Activated B cell treated with CpG ODN at 0.5 μM for 24 hours (primary cell): ENCODE measurements at regions of chr3 and their contacts with region 1.

Region 1: GRCh38 chr3:51941798-51942602 is at the starts of genes PARP3 and RRP9:
- DNase-seq: peak; percentile 96
- ATAC-seq: peak; percentile 94
- H3K4me3 Mint-ChIP-seq: peak within 1 kb of the TSS; percentile 90
- H3K27ac Mint-ChIP-seq: peak within 1 kb of the TSS; percentile 77
- H3K4me1 Mint-ChIP-seq: peaks cover 38% of the 10 kb centered on the region
- H3K27me3 Mint-ChIP-seq: no peaks in the 10 kb centered on the region
- CTCF ChIP-seq: peak; percentile 34
- total RNA-seq, gene PARP3: 9.7 and 12.7 TPM in 2 replicates
- total RNA-seq, gene RRP9: 30.7 and 32.4 TPM in 2 replicates

Region 2: GRCh38 chr3:51384726-51385473 is 557.1 kb before region 1 on chr3 and contains the start of gene MANF:
- CTCF ChIA-PET with region 1: no interaction called
- POLR2A ChIA-PET with region 1: interaction called, 3 read pairs
- intact Hi-C with region 1: loop called (anchors 1 kb)
- DNase-seq: peak; percentile 89
- ATAC-seq: peak; percentile 95
- H3K4me3 Mint-ChIP-seq: peak within 1 kb of the TSS; percentile 99
- H3K27ac Mint-ChIP-seq: peak within 1 kb of the TSS; percentile 98
- H3K4me1 Mint-ChIP-seq: peaks cover 49% of the 10 kb centered on the region
- H3K27me3 Mint-ChIP-seq: no peaks in the 10 kb centered on the region
- CTCF ChIP-seq: no peak
- total RNA-seq, gene MANF: 64.2 and 66.1 TPM in 2 replicates

Region 3: GRCh38 chr3:51955893-51956770 is 14.1 kb after region 1 on chr3:
- CTCF ChIA-PET with region 1: interaction called, 3 read pairs
- POLR2A ChIA-PET with region 1: no interaction called
- intact Hi-C with region 1: loop called (anchors 1 kb)
- DNase-seq: peak; percentile 47
- ATAC-seq: peak; percentile 83
- H3K4me3 Mint-ChIP-seq: peak overlapping the region; percentile 24
- H3K27ac Mint-ChIP-seq: no peak overlapping the region
- H3K4me1 Mint-ChIP-seq: peaks cover 2% of the 10 kb centered on the region
- H3K27me3 Mint-ChIP-seq: peaks cover 19% of the 10 kb centered on the region
- CTCF ChIP-seq: no peak

Region 4: DNA sequence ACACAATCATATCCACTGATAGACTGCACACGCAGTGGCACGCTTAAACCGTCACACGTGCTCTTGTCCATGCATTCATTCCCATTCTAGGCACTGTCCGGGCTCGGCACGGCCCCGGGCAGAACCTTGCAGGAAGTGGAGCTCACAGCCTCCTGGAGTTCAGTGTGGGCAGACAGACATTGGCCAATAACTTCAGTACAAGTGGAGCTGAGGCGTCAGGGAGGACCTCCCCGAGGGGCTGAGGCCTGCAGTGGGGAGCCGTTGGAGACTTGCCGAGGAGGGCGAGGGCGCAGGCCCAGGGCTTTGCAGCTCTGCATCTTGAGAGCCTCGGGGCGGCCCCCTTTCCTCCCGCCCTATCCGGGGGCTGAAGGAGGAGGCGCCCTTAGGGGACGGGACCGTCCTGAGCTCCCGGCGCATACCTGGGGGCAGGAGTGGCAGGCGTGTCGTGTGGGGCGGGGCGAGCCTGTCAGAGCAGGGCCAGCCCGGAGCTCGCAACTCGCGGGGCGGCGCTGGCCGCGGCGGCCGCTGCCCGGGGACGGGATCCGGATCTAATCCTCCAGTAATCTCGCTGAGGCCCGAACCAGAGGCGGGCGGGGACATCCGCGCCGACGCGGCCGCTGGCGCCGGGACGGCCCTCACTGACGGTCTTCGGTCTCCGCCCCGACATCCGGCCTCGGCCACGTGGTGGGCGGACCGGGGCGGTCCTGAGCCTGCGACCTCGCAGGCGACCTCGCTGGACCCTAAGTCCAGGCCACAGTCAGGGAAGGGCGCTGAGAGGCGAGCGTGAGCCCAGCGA is 41.0 kb after region 1 on chr3 and contains the start of gene ACY1:
- CTCF ChIA-PET with region 1: interaction called, 5 read pairs
- POLR2A ChIA-PET with region 1: interaction called, 10 read pairs
- intact Hi-C with region 1: loop called (anchors 2 kb)
- DNase-seq: peak; percentile 70
- ATAC-seq: peak; percentile 79
- H3K4me3 Mint-ChIP-seq: peak within 1 kb of the TSS; percentile 86
- H3K27ac Mint-ChIP-seq: peak within 1 kb of the TSS; percentile 91
- H3K4me1 Mint-ChIP-seq: peaks cover 23% of the 10 kb centered on the region
- H3K27me3 Mint-ChIP-seq: no peaks in the 10 kb centered on the region
- CTCF ChIP-seq: no peak
- total RNA-seq, gene ACY1: 24.9 and 26.7 TPM in 2 replicates

Region 5: DNA sequence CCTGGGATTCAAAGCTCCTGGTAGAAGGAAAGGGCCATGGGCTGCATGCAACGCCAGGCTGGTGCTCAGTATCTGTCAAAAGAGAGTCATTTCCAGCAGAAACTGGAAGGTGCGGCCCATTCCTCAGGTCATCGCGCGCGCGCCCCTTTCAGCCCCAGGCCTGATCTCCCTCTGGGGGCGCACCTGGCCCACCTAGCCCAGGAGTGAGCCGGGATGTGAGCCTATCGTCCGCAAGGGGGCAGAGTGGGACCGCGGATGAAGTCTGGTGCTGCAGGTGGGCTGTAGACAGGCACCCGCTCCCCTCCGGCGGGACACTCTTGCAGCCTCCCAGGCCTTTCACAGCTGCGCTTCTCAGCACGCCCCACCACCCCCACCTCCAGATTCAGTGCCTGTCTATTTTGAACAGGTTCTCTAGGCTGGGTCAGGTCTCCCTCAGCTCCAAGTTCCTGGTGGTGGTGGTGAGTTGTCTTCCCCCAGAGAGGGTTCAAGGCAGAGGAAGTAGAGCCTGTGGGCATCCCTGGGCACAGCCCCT is 59.5 kb after region 1 on chr3:
- CTCF ChIA-PET with region 1: interaction called, 5 read pairs
- POLR2A ChIA-PET with region 1: interaction called, 20 read pairs
- intact Hi-C with region 1: loop called (anchors 1 kb)
- DNase-seq: peak; percentile 85
- ATAC-seq: peak; percentile 99
- H3K4me3 Mint-ChIP-seq: no peak overlapping the region
- H3K27ac Mint-ChIP-seq: no peak overlapping the region
- H3K4me1 Mint-ChIP-seq: peaks cover 5% of the 10 kb centered on the region
- H3K27me3 Mint-ChIP-seq: peaks cover 2% of the 10 kb centered on the region
- CTCF ChIP-seq: peak; percentile 56

Region 6: DNA sequence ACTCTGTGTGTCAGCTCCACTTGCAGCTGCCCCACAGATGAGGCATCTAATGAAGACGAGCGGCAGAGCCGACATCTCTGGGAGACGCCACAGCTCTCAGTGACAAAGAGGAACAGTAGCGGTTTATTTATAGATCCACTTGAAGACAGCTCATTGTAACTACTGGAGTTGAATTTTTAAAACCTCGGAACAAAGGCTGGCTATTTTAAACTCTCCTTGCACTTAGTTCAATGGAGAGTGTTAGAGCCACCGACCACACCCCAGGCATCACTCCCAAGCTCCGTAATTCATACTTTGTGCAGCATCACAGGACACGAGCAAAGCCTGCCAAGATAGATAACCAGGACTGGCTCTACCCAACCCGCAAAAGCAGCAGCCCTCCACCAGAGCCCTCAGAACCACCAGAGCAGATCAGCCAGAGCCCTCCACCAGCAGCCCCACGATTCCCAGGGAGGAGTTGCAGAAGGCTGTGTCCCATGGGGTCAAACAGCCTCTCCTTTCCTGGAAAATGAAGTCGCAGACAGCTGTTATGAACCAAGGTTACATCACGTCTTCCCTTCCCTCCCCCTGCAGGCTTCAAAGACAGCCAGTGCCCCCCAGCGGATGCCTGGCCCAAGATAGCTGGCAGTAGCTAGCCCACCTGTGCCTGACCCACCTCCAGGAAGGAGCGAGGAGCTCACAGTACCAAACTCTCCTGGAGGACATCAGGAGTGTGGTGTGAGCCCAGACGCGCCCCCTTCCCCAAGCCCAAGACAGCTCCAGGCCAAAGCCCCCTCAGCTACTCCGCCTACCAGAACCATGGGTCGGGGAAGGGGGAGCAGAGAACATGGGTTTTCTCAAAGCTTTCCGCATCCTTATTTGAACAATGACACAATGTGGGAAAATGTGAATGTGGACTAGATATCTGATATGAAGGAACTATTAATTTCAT is 166.6 kb after region 1 on chr3:
- CTCF ChIA-PET with region 1: no interaction called
- POLR2A ChIA-PET with region 1: no interaction called
- intact Hi-C with region 1: no loop called
- DNase-seq: no peak
- ATAC-seq: no peak
- H3K4me3 Mint-ChIP-seq: no peak overlapping the region
- H3K27ac Mint-ChIP-seq: no peak overlapping the region
- H3K4me1 Mint-ChIP-seq: peaks cover 2% of the 10 kb centered on the region
- H3K27me3 Mint-ChIP-seq: no peaks in the 10 kb centered on the region
- CTCF ChIP-seq: no peak

Region 7: DNA sequence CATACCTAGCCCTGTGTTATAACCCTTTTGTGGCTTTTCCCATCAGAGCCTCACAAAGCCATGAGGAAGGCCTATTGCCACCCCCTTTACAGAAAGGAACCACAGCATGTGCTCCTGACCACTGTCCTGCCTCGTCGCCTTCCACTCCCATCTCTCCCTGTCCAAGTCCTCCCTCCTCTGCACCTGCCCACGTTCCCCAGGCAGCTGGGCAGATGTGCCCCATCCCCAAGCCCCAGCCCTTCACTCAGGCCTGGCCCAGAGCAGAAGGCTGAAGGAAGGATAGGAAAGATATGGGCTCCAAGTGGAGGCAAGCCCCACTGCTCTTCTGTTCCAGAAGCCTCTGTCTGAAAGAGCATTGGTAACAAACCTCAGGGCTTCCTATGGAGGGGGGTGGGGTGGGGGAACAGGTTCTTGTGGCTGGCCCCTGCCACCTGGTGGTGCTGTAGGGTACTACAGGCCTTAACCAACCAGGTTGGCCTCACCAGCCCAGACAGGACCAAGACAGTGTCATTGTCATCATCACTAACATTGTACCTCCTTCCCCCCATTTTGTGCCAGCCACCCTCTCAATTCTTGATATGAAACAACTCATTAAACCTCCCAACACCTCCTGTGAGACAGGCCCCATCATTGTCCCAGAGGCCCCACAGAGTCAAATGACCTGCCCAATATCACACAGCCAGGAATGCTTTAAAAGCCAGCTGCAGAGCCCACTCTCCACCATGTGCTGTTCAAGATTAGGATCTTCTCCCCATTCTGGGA is 202.2 kb after region 1 on chr3:
- CTCF ChIA-PET with region 1: interaction called, 3 read pairs
- POLR2A ChIA-PET with region 1: no interaction called
- intact Hi-C with region 1: loop called (anchors 1 kb)
- DNase-seq: peak; percentile 73
- ATAC-seq: peak; percentile 100
- H3K4me3 Mint-ChIP-seq: no peak overlapping the region
- H3K27ac Mint-ChIP-seq: no peak overlapping the region
- H3K4me1 Mint-ChIP-seq: peaks cover 4% of the 10 kb centered on the region
- H3K27me3 Mint-ChIP-seq: no peaks in the 10 kb centered on the region
- CTCF ChIP-seq: peak; percentile 66

Region 8: DNA sequence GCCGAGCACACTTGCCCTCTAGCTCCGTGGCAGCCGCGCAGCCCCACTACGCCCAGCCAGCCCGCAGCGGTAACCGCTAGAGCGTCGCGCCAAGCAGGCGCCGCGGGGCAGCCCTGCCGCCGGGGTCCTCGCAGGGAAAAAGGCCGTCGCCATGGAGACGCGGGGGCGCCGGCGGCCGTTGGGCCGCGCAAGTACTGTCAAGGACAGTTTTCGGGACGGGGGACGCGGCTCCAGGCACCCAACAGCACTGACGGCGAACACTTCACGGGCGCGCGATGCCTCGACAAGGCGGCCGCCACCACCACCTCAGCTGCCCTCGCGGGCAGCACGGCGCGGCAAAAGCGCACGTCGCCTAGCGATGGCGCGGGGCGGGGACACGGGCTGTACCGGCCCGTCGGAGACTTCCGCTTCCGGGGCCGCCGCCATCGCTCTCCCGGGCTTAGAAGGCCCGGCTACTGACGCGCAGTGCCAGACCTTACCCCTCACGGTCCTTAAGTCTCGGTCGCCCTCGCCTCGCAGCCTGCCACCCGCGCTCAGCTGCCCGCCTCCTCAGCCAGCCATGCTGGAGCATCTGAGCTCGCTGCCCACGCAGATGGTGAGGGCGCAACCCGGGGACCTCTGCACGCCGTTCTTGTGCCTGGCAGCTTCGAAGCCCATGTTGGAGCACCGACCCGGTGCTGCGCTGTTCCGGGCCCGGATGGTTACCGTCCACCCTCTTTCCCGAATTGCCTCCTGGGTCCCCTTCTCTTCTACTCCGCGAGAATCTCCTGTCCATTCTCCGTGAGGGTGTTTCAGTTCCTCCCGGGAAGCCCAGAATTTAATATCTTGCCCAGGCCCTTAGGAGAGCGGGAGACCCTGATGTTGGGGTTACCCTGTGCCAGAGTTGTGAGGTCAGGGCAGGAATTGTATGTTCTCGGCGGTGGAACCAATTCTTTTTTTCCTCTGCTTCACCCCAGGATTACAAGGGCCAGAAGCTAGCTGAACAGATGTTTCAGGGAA is 764.0 kb after region 1 on chr3 and contains the starts of genes GLT8D1 and SPCS1:
- CTCF ChIA-PET with region 1: no interaction called
- POLR2A ChIA-PET with region 1: no interaction called
- intact Hi-C with region 1: loop called (anchors 5 kb)
- DNase-seq: peak; percentile 87
- ATAC-seq: peak; percentile 87
- H3K4me3 Mint-ChIP-seq: peak within 1 kb of the TSS; percentile 94
- H3K27ac Mint-ChIP-seq: peak within 1 kb of the TSS; percentile 92
- H3K4me1 Mint-ChIP-seq: peaks cover 48% of the 10 kb centered on the region
- H3K27me3 Mint-ChIP-seq: no peaks in the 10 kb centered on the region
- CTCF ChIP-seq: no peak
- total RNA-seq, gene GLT8D1: 20.4 and 22.2 TPM in 2 replicates
- total RNA-seq, gene SPCS1: 78.0 and 79.4 TPM in 2 replicates

Region 9: GRCh38 chr3:52730681-52731080 is 788.7 kb after region 1 on chr3:
- CTCF ChIA-PET with region 1: no interaction called
- POLR2A ChIA-PET with region 1: no interaction called
- intact Hi-C with region 1: no loop called
- DNase-seq: no peak
- ATAC-seq: no peak
- H3K4me3 Mint-ChIP-seq: no peak overlapping the region
- H3K27ac Mint-ChIP-seq: no peak overlapping the region
- H3K4me1 Mint-ChIP-seq: peaks cover 6% of the 10 kb centered on the region
- H3K27me3 Mint-ChIP-seq: no peaks in the 10 kb centered on the region
- CTCF ChIP-seq: no peak